Common myeloid progenitor, CD34-positive (primary cell): ENCODE measurements at regions of chr9 and their contacts with region 1.

Region 1: GRCh38 chr9:114405294-114406034 is 17.7 kb upstream of the AKNA start:
- DNase-seq: peak; percentile 79 to 90 (median 86)
- H3K4me3 ChIP-seq: no peak overlapping the region
- H3K27ac ChIP-seq: no peak overlapping the region
- H3K4me1 ChIP-seq: peaks cover 0 to 8% (median 7%) of the 10 kb centered on the region in 4 experiments
- H3K27me3 ChIP-seq: no peaks in the 10 kb centered on the region

Region 2: DNA sequence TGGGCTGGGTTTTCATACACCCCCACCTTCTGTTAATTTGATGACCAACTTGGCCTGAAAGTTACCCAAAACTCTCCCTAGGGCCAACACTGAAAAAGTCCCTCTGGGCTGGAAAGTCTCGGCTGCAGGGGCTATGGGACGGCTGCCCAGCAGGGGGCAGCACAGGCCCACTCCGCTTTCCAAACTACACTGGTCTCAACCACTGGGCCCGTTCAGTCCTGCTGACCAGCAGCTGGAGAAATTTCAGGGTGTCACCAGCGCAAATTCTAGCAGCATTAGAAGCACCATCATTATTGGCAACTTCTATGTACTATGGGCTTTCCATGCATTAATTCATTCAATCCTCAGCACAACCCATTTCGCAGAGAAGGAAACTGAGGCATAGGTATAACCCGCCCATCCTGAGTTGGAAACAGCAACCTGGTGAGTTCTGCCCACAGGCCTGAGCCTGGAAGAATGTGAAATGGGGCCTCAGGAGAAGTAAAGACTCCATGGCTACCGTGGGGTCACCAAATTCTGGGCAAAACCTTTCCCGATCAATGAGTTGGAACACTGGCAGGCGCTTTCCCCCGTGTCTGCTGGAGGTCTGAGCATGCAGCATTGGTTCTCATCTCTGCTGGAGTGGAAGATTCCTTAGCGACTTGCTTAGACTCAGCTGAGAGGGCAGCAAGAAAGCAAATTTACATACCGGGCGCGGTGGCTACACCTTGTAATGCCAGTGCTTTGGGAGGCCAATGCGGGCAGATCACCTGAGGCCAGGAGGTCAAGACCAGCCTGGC is 66.1 kb before region 1 on chr9:
- CTCF ChIA-PET with region 1: interaction called, 41 read pairs
- POLR2A ChIA-PET with region 1: no interaction called
- DNase-seq: peak; percentile 39 to 52 (median 50)
- H3K4me3 ChIP-seq: no peak overlapping the region
- H3K27ac ChIP-seq: no peak overlapping the region
- H3K4me1 ChIP-seq: peaks cover 0 to 9% (median 0%) of the 10 kb centered on the region in 4 experiments
- H3K27me3 ChIP-seq: no peaks in the 10 kb centered on the region

Region 3: GRCh38 chr9:114385412-114386181 is 19.9 kb before region 1 on chr9:
- CTCF ChIA-PET with region 1: interaction called, 14 read pairs
- POLR2A ChIA-PET with region 1: no interaction called
- DNase-seq: peak; percentile 91 to 98 (median 97)
- H3K4me3 ChIP-seq: peak overlapping the region in 6 of 7 experiments; percentile 88 to 95 (median 90)
- H3K27ac ChIP-seq: peak overlapping the region; percentile 88 to 89
- H3K4me1 ChIP-seq: peaks cover 41 to 91% (median 85%) of the 10 kb centered on the region in 4 experiments
- H3K27me3 ChIP-seq: no peaks in the 10 kb centered on the region

Region 4: DNA sequence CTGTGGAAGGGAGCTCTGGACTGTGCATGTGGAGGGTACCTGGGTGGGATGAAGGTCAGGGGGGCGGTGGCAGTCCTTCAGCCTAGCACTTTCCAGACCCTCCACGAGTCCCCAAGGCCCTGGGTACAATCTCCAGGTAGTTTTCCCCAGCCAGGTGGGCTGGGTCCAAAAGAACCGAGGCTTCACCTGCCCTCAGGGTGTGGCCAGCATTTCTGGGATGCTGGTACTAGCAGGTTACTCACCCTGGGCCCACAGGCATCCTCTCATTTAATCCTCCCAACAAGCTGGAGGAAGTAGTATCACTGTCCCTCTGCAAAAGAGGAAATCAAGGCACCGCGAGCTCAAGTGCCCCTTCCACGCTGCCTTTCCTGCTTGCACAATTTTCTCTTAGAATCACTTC is 15.1 kb after region 1 on chr9:
- CTCF ChIA-PET with region 1: interaction called, 43 read pairs
- POLR2A ChIA-PET with region 1: no interaction called
- DNase-seq: no peak
- H3K4me3 ChIP-seq: no peak overlapping the region
- H3K27ac ChIP-seq: no peak overlapping the region
- H3K4me1 ChIP-seq: no peaks in the 10 kb centered on the region
- H3K27me3 ChIP-seq: no peaks in the 10 kb centered on the region

Region 5: DNA sequence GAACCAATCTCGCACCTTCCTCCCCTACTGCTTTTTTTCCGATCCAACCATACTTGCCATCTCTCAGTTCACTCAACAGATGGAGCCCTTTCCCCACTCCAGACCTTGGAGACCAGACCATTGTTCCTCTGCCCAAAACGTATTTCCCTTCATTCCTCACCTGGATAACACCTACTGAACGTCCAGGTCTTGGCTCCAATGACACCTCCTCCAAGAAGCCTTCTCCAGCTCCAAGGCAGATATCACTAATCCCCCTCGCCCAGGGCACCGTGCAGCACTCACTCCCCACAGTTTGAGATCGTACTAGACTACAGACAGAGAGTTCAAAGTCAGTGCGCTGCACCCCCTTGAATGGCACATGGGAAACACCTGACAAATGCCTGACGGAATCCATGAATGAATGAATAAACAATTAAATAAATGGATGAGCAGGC is 29.4 kb after region 1 on chr9:
- CTCF ChIA-PET with region 1: interaction called, 84 read pairs
- POLR2A ChIA-PET with region 1: no interaction called
- DNase-seq: peak; percentile 61 to 69 (median 62)
- H3K4me3 ChIP-seq: no peak overlapping the region
- H3K27ac ChIP-seq: no peak overlapping the region
- H3K4me1 ChIP-seq: peaks cover 0 to 11% (median 3%) of the 10 kb centered on the region in 4 experiments
- H3K27me3 ChIP-seq: no peaks in the 10 kb centered on the region